ENCODE measurements at regions of chr7 and their contacts with region 1.

Region 1: GRCh38 chr7:155009570-155010157 is 6.7 kb upstream of the PAXIP1 start:
- DNase-seq: no peak

Region 2: DNA sequence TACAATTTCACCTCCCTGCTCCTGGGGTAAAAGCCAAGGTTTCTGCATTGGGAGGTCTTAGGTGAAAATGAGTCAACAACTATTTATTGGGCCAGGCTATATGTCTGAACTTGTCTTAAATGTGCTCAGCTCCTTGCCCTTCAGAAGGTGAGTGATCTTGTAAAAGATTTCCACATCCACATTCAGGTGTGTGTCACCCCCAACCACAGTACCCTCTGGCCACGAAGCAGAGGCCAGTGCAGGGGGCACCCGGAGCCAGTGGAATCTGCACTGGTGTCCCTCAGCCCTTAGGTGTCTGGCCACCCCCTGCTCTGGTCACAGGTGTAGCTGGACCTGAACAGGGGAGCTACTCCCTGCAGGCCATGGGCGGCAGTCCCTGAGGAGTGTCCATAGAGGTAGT is 205.2 kb before region 1 on chr7:
- intact Hi-C with region 1: no loop called
- DNase-seq: no peak

Region 3: GRCh38 chr7:154927624-154928143 is 82.0 kb before region 1 on chr7:
- intact Hi-C with region 1: loop called (anchors 5 kb)
- DNase-seq: peak; percentile 37 to 94 (median 84)

Measured in head of caudate nucleus (tissue), 42 donors.